ENCODE measurements at regions of chr7 and their contacts with region 1.

Region 1: DNA sequence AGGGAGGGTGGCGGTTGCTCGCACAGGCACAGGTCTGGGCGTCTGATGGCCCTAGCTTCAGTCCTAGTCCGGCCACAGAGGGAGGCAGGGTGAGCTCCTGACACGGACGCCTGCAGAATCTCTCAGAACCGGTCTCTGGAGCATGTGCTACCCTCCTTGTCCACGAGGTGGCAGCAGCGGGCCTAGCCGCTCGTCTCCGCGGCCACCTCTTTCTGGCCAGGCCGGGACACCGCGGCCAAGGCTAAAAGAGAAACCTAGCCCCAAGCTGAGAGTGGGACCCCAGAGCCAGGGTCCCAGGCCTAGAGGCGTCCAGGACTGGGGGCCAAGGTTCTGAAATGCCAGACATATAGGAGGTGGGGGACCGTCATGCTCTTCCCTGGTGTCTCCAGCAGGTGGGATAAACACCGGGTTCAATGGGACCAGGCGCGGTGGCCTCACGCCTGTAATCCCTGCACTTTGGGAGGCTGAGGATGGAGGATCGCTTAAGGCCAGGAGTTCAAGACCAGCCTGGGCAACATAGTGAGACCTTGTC is 3.2 kb upstream of the LAT2 start:
- DNase-seq: peak; percentile 85
- ATAC-seq: peak; percentile 75
- H3K4me3 Mint-ChIP-seq: no peak overlapping the region
- H3K27ac Mint-ChIP-seq: no peak overlapping the region
- H3K4me1 Mint-ChIP-seq: peaks cover 32% of the 10 kb centered on the region
- H3K27me3 Mint-ChIP-seq: peaks cover 3% of the 10 kb centered on the region

Region 2: GRCh38 chr7:74173866-74174605 is 32.6 kb before region 1 on chr7 and contains the start of gene EIF4H:
- CTCF ChIA-PET with region 1: interaction called, 40 read pairs
- DNase-seq: peak; percentile 94
- ATAC-seq: peak; percentile 88
- H3K4me3 Mint-ChIP-seq: peak within 1 kb of the TSS; percentile 87
- H3K27ac Mint-ChIP-seq: peak within 1 kb of the TSS; percentile 86
- H3K4me1 Mint-ChIP-seq: peaks cover 41% of the 10 kb centered on the region
- H3K27me3 Mint-ChIP-seq: no peaks in the 10 kb centered on the region
- total RNA-seq, gene EIF4H: 278 to 322 TPM

Region 3: GRCh38 chr7:74217455-74218342 is 11.0 kb after region 1 on chr7:
- CTCF ChIA-PET with region 1: interaction called, 58 read pairs
- DNase-seq: peak; percentile 69
- ATAC-seq: peak; percentile 65
- H3K4me3 Mint-ChIP-seq: no peak overlapping the region
- H3K27ac Mint-ChIP-seq: peak overlapping the region; percentile 82
- H3K4me1 Mint-ChIP-seq: peaks cover 29% of the 10 kb centered on the region
- H3K27me3 Mint-ChIP-seq: no peaks in the 10 kb centered on the region

Region 4: GRCh38 chr7:74236284-74236683 is 29.6 kb after region 1 on chr7:
- CTCF ChIA-PET with region 1: interaction called, 28 read pairs
- DNase-seq: peak; percentile 86
- ATAC-seq: peak; percentile 65
- H3K4me3 Mint-ChIP-seq: no peak overlapping the region
- H3K27ac Mint-ChIP-seq: peak overlapping the region; percentile 81
- H3K4me1 Mint-ChIP-seq: peaks cover 40% of the 10 kb centered on the region
- H3K27me3 Mint-ChIP-seq: no peaks in the 10 kb centered on the region

Region 5: GRCh38 chr7:74272305-74273038 is 65.8 kb after region 1 on chr7:
- CTCF ChIA-PET with region 1: interaction called, 14 read pairs
- DNase-seq: peak; percentile 84
- ATAC-seq: peak; percentile 68
- H3K4me3 Mint-ChIP-seq: no peak overlapping the region
- H3K27ac Mint-ChIP-seq: peak overlapping the region; percentile 60
- H3K4me1 Mint-ChIP-seq: peaks cover 17% of the 10 kb centered on the region
- H3K27me3 Mint-ChIP-seq: peaks cover 13% of the 10 kb centered on the region

Region 6: DNA sequence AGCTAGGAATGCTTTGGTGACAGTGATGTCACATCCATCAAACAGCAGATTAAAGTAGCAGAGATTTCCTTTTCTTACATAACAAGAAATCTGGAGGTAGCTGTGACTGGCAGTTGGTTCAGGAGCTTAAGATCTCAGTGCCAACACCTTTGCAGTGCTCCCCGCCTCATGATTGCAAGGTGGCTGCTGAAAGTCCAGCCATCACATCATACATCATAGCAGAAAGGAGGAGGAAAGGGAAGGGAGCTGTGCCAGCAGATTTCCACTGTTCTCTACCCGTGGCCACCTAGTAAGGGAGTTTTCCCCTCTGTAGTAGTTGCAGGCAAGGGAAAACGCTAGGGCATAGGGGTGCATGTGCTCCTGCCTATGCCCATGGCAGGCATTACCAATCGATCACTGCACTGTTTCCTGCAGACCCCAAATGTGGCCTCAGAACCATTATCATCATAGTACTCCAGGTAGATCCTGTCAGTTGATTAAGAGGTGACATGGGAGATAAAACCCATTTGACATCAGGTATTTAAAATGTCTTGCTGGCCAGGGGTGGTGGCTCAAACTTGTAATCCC is 189.2 kb after region 1 on chr7:
- CTCF ChIA-PET with region 1: interaction called, 197 read pairs
- DNase-seq: no peak
- ATAC-seq: no peak
- H3K4me3 Mint-ChIP-seq: no peak overlapping the region
- H3K27ac Mint-ChIP-seq: no peak overlapping the region
- H3K4me1 Mint-ChIP-seq: no peaks in the 10 kb centered on the region
- H3K27me3 Mint-ChIP-seq: no peaks in the 10 kb centered on the region